ENCODE measurements at regions of chr3 and their contacts with region 1.

Region 1: GRCh38 chr3:12922306-12922705 is 80.9 kb upstream of the RPL32 start:
- DNase-seq: no peak
- H3K4me3 ChIP-seq: no peak overlapping the region
- H3K27ac ChIP-seq: peak overlapping the region in 1 of 5 donors; percentile 45
- H3K4me1 ChIP-seq: no peaks in the 10 kb centered on the region
- H3K27me3 ChIP-seq: no peaks in the 10 kb centered on the region
- CTCF ChIP-seq: no peak
- POLR2A ChIP-seq: no peak

Region 2: GRCh38 chr3:12970684-12971083 is 48.4 kb after region 1 on chr3:
- intact Hi-C with region 1: loop called in 1 of 2 experiments (anchors 10 kb)
- DNase-seq: no peak
- H3K4me3 ChIP-seq: no peak overlapping the region
- H3K27ac ChIP-seq: no peak overlapping the region
- H3K4me1 ChIP-seq: peaks cover 15 to 29% of the 10 kb centered on the region in 2 donors
- H3K27me3 ChIP-seq: no peaks in the 10 kb centered on the region
- CTCF ChIP-seq: no peak
- POLR2A ChIP-seq: no peak

Region 3: GRCh38 chr3:12994607-12995388 is 72.5 kb after region 1 on chr3:
- intact Hi-C with region 1: no loop called
- DNase-seq: peak; percentile 89 to 94 (median 91)
- H3K4me3 ChIP-seq: peak overlapping the region; percentile 29 to 64 (median 46)
- H3K27ac ChIP-seq: peak overlapping the region; percentile 82 to 96 (median 93)
- H3K4me1 ChIP-seq: peaks cover 36 to 63% of the 10 kb centered on the region in 2 donors
- H3K27me3 ChIP-seq: no peaks in the 10 kb centered on the region
- CTCF ChIP-seq: peak; percentile 80 to 97 (median 88)
- POLR2A ChIP-seq: peak; percentile 79 to 91

Region 4: GRCh38 chr3:13012228-13012691 is 90.0 kb after region 1 on chr3:
- intact Hi-C with region 1: no loop called
- DNase-seq: peak; percentile 71 to 92 (median 88)
- H3K4me3 ChIP-seq: no peak overlapping the region
- H3K27ac ChIP-seq: peak overlapping the region; percentile 12 to 97 (median 73)
- H3K4me1 ChIP-seq: peaks cover 38 to 76% of the 10 kb centered on the region in 2 donors
- H3K27me3 ChIP-seq: no peaks in the 10 kb centered on the region
- CTCF ChIP-seq: no peak
- POLR2A ChIP-seq: peak in 1 of 2 donors; percentile 20

Measured in adrenal gland (tissue), 19 donors.